ENCODE measurements at regions of chr11 and their contacts with region 1.

Region 1: DNA sequence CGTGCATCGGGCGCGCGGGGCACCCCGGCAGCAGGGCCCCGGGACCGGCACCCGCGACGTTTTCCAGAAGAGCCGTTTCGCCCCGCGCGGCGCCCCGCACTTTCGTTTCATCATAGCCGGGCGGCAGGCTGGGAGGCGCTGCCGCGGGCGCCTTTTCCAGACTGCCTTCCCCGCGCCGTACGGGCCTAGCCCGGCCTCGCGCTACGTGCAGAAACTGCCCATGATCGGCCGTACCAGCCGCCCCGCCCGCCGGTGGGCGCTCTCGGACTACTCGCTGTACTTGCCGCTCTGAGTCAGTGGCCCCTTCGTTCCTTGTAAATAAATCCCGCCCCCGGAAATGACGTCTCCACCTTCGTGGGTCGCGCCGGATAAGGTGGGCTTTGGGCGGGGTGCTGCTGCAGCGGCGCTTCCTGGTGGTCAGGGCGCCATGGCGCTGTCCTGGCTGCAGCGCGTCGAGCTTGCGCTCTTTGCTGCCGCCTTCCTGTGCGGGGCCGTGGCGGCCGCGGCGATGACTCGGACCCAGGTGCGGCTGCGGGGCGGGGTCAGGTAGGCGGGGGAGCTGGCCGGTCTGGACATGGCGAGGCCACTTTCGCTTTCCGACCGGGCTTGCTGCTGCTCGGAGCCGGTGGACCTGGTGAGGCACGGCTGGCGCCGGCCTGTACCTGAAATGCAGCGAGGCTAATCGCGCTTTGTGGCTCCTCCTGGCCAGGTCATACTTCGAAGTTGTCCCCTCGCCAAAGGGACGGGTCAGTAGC is at the start of gene TMEM179B:
- DNase-seq: peak; percentile 98
- H3K4me3 ChIP-seq: peak within 1 kb of the TSS; percentile 60
- H3K27ac ChIP-seq: peak within 1 kb of the TSS; percentile 74
- H3K4me1 ChIP-seq: peaks cover 32% of the 10 kb centered on the region
- H3K27me3 ChIP-seq: no peaks in the 10 kb centered on the region
- CTCF ChIP-seq: peak; percentile 29
- total RNA-seq, gene TMEM179B: 45.5 and 48.3 TPM in 2 replicates

Region 2: DNA sequence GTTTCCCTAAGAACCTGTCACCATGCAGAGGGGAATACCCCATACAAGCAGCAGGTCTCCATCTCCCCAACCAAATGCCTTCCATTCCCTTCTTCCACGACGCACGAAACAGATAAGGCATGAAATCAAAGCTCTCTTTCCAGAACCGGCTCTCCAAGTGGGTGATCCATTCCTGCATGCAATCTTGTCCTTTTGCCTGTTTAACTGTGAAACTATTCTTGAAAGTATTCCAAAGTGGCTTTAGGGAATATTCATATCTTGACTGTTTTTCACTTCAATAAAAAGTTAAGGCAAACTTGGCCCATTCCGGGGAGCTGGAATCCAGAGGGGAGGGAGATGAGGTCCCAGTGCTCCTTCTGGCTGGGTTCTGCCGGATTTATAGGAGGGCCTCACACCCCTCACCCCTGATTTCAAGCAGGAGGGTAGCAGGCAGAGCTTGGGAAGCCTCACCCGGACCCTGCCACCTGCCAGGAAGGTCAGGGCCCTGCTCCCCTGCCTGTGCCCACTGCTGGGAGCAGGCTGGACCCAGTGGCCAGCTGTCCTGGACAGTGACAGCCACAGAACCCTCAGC is 307.5 kb before region 1 on chr11:
- CTCF ChIA-PET with region 1: no interaction called
- POLR2A ChIA-PET with region 1: interaction called, 23 read pairs
- intact Hi-C with region 1: no loop called
- DNase-seq: no peak
- H3K4me3 ChIP-seq: peak overlapping the region; percentile 36; the same call in 1 of the 2 replicates
- H3K27ac ChIP-seq: peak overlapping the region; percentile 95
- H3K4me1 ChIP-seq: peaks cover 42% of the 10 kb centered on the region
- H3K27me3 ChIP-seq: no peaks in the 10 kb centered on the region
- CTCF ChIP-seq: no peak

Region 3: DNA sequence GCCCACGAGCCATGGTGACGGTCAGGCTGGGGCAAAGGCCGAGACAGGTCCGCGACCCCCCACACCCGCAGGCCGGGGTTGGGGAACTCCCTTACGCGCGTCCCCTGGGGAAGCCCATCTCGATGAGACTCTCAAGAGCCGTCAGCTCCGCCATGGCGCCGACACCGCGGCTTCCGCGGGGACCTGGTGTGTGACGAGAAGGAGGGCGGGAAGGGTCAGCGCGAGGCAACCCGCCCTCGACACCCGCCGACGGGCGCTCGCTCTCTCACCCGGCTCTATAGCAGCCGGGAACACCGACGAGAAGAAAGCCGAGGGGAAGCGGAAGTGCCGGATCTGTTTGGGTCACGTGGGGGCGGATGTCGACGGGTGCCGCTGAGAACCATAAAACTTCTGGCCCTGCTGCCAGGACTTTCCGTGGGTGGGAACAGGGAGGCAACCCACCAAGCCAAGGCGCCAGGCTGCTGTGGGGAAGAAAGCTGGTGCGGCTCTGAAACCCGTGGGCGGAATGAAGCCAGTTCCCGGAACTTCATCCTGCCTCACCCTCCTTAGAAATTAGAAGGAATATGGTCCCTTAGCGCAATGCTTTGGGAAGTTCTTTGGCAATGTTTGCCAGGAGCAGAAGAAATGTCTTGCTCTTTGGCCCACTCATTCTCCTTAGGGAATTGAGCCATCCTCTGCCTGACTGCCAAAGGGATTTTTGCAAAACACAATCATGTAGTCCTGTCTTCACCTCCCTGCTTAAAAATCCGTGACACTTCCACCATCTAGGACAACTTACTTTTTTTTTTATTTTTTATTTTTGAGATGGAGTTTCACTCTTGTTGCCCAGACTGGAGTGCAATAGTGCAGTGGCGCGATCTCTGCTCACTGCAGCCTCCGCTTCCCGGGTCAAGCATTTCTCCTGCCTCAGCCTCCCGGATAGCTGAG is 108.1 kb before region 1 on chr11 and contains the start of gene UBXN1:
- CTCF ChIA-PET with region 1: interaction called, 3 read pairs
- POLR2A ChIA-PET with region 1: interaction called, 5 read pairs
- intact Hi-C with region 1: loop called (anchors 5 kb)
- DNase-seq: peak; percentile 78 to 80
- H3K4me3 ChIP-seq: peak within 1 kb of the TSS; percentile 76
- H3K27ac ChIP-seq: peak within 1 kb of the TSS; percentile 37
- H3K4me1 ChIP-seq: peaks cover 29% of the 10 kb centered on the region
- H3K27me3 ChIP-seq: no peaks in the 10 kb centered on the region
- CTCF ChIP-seq: no peak
- total RNA-seq, gene UBXN1: 143 and 150 TPM in 2 replicates

Region 4: GRCh38 chr11:62737196-62737595 is 50.0 kb before region 1 on chr11:
- CTCF ChIA-PET with region 1: no interaction called
- POLR2A ChIA-PET with region 1: no interaction called
- intact Hi-C with region 1: no loop called
- DNase-seq: no peak
- H3K4me3 ChIP-seq: no peak overlapping the region
- H3K27ac ChIP-seq: no peak overlapping the region
- H3K4me1 ChIP-seq: no peaks in the 10 kb centered on the region
- H3K27me3 ChIP-seq: no peaks in the 10 kb centered on the region
- CTCF ChIP-seq: no peak

Region 5: GRCh38 chr11:62831520-62832335 is 44.5 kb after region 1 on chr11 and contains the start of gene STX5:
- CTCF ChIA-PET with region 1: no interaction called
- POLR2A ChIA-PET with region 1: interaction called, 7 read pairs
- intact Hi-C with region 1: loop called (anchors 2 kb)
- DNase-seq: peak; percentile 96 to 99
- H3K4me3 ChIP-seq: peak within 1 kb of the TSS; percentile 100
- H3K27ac ChIP-seq: peak within 1 kb of the TSS; percentile 77
- H3K4me1 ChIP-seq: peaks cover 22% of the 10 kb centered on the region
- H3K27me3 ChIP-seq: no peaks in the 10 kb centered on the region
- CTCF ChIP-seq: no peak
- total RNA-seq, gene STX5: 61.9 and 65.8 TPM in 2 replicates

Region 6: DNA sequence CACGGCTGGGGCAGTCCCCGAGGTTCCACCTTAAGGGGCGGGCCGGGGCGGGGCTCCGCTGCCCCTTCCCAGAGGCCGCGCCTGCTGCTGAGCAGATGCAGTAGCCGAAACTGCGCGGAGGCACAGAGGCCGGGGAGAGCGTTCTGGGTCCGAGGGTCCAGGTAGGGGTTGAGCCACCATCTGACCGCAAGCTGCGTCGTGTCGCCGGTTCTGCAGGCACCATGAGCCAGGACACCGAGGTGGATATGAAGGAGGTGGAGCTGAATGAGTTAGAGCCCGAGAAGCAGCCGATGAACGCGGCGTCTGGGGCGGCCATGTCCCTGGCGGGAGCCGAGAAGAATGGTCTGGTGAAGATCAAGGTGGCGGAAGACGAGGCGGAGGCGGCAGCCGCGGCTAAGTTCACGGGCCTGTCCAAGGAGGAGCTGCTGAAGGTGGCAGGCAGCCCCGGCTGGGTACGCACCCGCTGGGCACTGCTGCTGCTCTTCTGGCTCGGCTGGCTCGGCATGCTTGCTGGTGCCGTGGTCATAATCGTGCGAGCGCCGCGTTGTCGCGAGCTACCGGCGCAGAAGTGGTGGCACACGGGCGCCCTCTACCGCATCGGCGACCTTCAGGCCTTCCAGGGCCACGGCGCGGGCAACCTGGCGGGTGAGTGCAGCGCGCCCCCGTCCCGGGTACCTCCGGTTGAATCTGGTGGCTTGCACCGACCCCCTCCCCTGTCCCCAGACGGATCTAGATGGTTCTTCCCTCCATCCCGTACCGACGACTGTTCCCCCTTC is 93.8 kb after region 1 on chr11 and contains the start of gene SLC3A2:
- CTCF ChIA-PET with region 1: interaction called, 4 read pairs
- POLR2A ChIA-PET with region 1: interaction called, 3 read pairs
- intact Hi-C with region 1: loop called (anchors 5 kb)
- DNase-seq: peak; percentile 85 to 90
- H3K4me3 ChIP-seq: peak within 1 kb of the TSS; percentile 69
- H3K27ac ChIP-seq: peak within 1 kb of the TSS; percentile 96
- H3K4me1 ChIP-seq: peaks cover 48% of the 10 kb centered on the region
- H3K27me3 ChIP-seq: no peaks in the 10 kb centered on the region
- CTCF ChIP-seq: peak; percentile 68
- total RNA-seq, gene SLC3A2: 513 and 619 TPM in 2 replicates

Region 7: GRCh38 chr11:62922658-62923431 is 135.7 kb after region 1 on chr11:
- CTCF ChIA-PET with region 1: no interaction called
- POLR2A ChIA-PET with region 1: no interaction called
- intact Hi-C with region 1: no loop called
- DNase-seq: peak in 1 of 2 experiments; percentile 40
- H3K4me3 ChIP-seq: no peak overlapping the region
- H3K27ac ChIP-seq: no peak overlapping the region
- H3K4me1 ChIP-seq: no peaks in the 10 kb centered on the region
- H3K27me3 ChIP-seq: peaks cover 88% of the 10 kb centered on the region
- CTCF ChIP-seq: peak; percentile 32; the same call in 1 of the 2 replicates

Measured in PC-9 (cell line).